HEK293T (cell line): ENCODE measurements at regions of chr17 and their contacts with region 1.

Region 1: DNA sequence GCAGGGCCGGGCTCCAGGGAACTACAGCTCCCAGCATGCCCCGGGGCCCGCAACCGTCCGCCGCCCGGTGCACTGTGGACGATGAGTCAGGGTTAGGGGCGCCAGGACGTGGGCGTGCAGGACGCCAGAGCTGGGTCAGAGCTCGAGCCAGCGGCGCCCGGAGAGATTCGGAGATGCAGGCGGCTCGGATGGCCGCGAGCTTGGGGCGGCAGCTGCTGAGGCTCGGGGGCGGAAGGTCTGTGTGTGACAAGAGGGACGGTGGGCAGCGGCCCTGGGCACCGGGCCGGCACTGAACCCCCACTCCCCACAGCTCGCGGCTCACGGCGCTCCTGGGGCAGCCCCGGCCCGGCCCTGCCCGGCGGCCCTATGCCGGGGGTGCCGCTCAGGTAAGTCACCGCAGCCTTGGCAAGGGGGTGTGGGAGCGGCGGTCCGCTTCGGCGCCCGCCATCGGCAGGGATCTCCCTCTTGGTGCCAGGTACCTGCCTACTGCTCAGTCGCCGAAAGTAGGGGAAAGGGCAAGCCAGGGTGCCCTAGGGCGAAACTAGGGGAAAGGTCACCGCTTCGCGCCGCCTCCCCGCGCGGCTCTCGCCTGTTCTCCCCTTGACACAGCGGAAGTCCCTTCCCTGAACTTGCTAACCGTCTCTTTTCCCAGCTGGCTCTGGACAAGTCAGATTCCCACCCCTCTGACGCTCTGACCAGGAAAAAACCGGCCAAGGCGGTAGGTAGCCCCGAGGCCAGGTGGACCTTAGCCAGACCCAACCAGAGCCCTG is at the starts of genes ACADVL and DLG4:
- DNase-seq: peak; percentile 71

Region 2: GRCh38 chr17:7203391-7203790 is 16.6 kb before region 1 on chr17:
- CTCF ChIA-PET with region 1: no interaction called
- POLR2A ChIA-PET with region 1: no interaction called
- DNase-seq: no peak

Region 3: DNA sequence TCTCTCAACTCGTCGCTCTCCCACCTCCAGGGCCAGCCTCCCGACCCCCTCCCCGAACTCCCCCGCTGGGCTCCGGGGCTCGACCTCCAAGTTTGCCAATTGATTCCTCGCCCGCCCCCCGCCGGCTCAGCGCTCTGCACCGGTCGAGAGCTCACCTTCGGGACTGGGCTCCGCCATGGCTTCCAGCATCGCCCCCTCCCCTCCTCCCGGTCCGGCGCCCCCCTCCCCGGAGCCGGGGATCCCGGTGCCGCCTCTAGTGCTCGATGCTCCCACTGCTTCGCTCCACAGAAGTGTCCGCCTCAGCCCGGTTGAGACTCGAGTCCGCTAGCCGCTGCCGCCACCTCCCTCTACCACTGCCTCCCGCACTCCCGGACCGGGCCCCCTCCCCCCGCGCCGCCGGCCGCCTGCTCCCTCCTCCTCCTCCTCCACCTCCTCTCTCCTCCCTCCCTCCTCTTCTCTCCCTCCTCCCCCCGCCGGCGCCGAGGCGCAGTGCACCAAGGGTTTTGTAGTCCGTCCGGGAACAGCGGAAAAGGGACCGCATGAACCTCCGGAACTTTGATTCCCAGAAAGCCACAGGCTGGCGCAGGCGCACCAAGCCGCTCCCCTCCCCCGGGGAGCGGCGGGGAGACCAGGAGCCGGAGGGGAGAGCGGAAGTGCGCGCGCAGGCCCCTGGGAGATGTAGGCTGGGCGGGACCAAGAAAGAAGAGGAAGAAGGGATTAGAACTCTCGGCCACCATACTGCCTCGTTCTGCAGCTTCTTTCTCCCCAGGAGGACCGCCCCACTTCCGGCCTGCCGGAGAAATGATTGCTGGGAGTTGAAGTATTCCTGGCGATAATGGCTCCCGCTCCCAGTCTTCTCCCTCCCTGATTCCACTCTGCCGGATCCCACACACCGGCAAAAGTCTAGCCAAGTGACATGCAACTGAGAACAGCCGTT is 19.4 kb after region 1 on chr17 and contains the start of gene PHF23:
- CTCF ChIA-PET with region 1: interaction called, 4 read pairs
- POLR2A ChIA-PET with region 1: interaction called, 166 read pairs
- DNase-seq: peak; percentile 96

Region 4: DNA sequence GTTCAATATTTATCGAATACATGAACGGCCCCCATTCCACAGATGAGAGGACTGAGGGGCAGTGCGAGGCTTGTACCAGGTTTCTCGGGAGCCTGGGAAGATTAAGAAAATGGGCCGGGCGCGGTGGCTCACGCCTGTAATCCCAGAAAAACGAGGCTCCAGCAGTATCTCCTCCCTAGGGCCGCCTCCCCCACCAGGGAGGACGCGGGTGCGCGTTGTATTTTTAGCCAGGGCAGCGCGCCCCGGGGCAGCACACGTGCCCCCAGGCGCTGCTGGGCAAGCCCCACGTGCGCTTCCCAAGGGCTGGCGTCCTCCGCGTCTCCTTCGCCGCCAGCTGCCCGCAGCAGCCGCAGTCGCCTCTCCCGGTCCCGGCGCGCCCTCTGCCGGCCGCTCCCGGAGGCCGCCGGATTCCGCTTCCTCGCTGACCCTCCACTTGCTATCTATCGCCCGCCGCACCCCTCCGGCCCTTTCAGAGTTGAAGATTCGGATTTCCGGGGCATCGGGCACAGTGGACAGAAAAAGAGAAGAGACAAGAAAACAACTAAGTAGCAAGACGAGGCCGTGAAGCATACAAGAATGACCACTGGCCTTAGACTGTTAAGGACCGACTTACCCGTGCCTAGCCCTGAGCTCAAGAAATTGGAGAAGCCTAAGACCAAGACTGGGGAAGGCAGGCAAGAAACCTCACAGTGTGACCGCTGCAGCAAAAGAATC is 76.3 kb after region 1 on chr17:
- CTCF ChIA-PET with region 1: no interaction called
- POLR2A ChIA-PET with region 1: interaction called, 12 read pairs
- DNase-seq: peak; percentile 92

Region 5: DNA sequence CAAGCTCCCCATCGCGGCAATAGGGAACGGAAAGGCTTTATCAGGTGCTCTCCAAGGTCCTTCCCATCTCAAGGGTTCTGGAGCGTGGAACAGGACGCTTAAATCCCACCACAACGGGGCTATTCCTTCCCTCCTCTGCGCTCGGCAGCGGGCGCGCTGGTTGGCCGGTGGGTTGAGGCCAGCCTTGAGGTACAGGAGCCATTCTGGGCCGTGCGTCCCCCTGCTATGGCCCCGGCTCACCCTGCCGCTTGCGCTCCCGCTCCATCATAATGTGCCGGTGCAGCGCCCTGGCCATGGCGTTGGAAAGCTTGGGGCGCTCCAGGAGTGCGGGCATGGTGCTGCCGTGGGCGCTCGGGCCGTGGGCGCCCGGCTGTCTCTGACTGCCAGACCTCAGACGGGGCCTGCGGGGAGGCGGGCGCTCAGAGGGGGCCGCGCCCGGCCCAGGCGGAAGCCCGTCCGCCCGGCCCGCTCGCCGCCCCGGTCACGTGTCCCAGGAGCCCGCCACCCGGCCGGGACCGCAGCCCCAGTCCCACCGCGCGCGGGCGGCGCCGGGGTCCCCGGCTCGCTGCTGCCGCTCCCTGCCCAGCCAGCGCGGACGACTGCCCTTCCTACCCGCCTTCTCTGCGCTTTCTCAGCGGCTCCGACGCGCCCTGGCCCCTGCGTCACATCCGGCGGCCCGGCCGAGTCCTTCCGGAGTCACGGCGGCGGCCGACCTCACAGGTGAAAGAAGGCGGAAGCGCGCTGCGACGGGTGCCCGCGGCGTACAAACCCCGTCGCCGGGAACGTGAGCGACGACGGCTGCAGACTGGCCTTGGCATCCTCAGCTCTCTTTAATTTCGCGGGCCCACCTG is 94.9 kb after region 1 on chr17 and contains the start of gene GPS2:
- CTCF ChIA-PET with region 1: no interaction called
- POLR2A ChIA-PET with region 1: interaction called, 10 read pairs
- DNase-seq: peak; percentile 92